Ascending aorta (tissue), 2 donors: ENCODE measurements at regions of chr6 and their contacts with region 1.

Region 1: DNA sequence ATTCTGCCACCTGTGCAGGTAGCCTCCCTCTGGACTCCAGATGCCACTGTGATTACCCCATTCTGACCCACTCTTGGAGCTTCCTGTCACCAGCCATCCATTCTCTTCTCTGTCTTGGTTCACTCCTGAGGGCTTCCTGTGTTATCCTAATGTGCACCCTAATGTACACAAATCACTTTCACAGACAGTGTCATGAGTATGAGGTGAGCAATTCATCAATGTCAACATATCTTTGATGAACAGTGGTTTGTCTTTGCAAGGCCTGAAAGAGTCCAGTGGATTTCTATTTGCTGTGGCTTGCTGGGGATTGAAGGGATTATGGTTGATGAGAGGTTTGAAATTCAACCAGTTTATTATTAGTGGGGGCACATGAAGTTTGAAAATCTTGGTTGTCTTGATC is 63.8 kb upstream of the EEF1E1 start:
- DNase-seq: no peak
- H3K4me3 ChIP-seq: no peak overlapping the region
- H3K27ac ChIP-seq: no peak overlapping the region
- H3K4me1 ChIP-seq: no peaks in the 10 kb centered on the region
- H3K27me3 ChIP-seq: no peaks in the 10 kb centered on the region
- CTCF ChIP-seq: no peak

Region 2: GRCh38 chr6:8043221-8043620 is 122.9 kb before region 1 on chr6:
- intact Hi-C with region 1: no loop called
- DNase-seq: no peak
- H3K4me3 ChIP-seq: no peak overlapping the region
- H3K27ac ChIP-seq: no peak overlapping the region
- H3K4me1 ChIP-seq: no peaks in the 10 kb centered on the region
- H3K27me3 ChIP-seq: no peaks in the 10 kb centered on the region
- CTCF ChIP-seq: no peak

Region 3: DNA sequence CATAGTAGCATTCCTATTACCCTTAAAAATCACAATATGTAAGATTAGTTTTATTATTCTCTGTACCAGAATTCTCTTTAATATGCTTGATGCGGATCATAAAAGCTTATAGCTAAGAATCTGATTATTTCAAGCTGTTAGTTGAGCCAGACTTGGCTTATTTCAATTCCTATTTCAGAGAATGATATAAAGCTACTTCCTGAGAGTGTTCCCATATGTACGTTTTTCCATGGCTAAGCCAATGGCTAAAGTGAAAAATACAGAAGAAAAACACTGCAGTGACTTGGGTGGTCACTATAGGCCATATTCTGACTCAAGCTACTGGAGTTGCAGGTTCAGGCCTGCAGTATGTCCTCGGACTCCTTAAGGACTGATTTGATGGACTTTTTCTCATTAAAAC is 34.1 kb after region 1 on chr6:
- intact Hi-C with region 1: loop called (anchors 5 kb)
- DNase-seq: no peak
- H3K4me3 ChIP-seq: no peak overlapping the region
- H3K27ac ChIP-seq: no peak overlapping the region
- H3K4me1 ChIP-seq: no peaks in the 10 kb centered on the region
- H3K27me3 ChIP-seq: no peaks in the 10 kb centered on the region
- CTCF ChIP-seq: no peak

Region 4: GRCh38 chr6:8329562-8329961 is 163.4 kb after region 1 on chr6:
- intact Hi-C with region 1: no loop called
- DNase-seq: no peak
- H3K4me3 ChIP-seq: no peak overlapping the region
- H3K27ac ChIP-seq: no peak overlapping the region
- H3K4me1 ChIP-seq: no peaks in the 10 kb centered on the region
- H3K27me3 ChIP-seq: no peaks in the 10 kb centered on the region
- CTCF ChIP-seq: no peak